Activated B cell treated with CpG ODN at 0.5 μM for 24 hours (primary cell): ENCODE measurements at regions of chr10 and their contacts with region 1.

Region 1: GRCh38 chr10:49486009-49486408 is 52.9 kb downstream of the ERCC6 start:
- DNase-seq: no peak
- ATAC-seq: no peak
- H3K4me3 Mint-ChIP-seq: no peak overlapping the region
- H3K27ac Mint-ChIP-seq: no peak overlapping the region
- H3K4me1 Mint-ChIP-seq: no peaks in the 10 kb centered on the region
- H3K27me3 Mint-ChIP-seq: no peaks in the 10 kb centered on the region
- CTCF ChIP-seq: no peak

Region 2: DNA sequence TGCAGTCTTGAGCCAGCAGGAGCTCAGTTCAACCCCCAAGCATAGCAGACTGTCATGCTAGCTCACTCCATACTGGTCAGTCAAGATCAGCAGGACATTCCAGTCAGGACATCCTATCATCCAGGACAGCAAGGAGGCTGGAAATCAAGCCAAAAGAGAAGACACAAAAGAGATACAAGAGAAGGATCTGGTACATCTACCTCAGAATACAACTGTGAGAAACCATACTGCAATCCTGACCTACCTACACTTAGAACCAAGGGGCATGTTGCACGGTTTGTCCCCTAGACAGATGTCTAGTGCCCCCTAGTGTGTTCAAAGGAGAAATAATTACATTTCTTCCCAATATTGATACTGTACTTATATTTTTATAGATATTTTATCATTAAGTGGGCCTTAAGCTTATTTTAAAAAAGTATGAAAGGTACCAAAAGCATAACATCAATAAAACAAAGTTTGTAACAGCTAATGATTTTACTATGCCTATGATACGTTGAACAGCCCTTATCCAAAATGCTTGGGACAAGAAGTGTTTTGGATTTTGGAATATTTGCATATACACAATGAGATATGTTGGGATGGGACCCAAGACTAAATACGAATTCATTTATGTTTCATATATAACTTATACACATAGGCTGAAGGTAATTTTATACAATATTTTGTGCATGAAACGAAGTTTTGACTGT is 26.3 kb after region 1 on chr10:
- CTCF ChIA-PET with region 1: no interaction called
- POLR2A ChIA-PET with region 1: no interaction called
- intact Hi-C with region 1: loop called (anchors 2 kb)
- DNase-seq: no peak
- ATAC-seq: peak; percentile 42
- H3K4me3 Mint-ChIP-seq: no peak overlapping the region
- H3K27ac Mint-ChIP-seq: no peak overlapping the region
- H3K4me1 Mint-ChIP-seq: peaks cover 20% of the 10 kb centered on the region
- H3K27me3 Mint-ChIP-seq: no peaks in the 10 kb centered on the region
- CTCF ChIP-seq: no peak